ENCODE measurements at regions of chr20 and their contacts with region 1.

Region 1: DNA sequence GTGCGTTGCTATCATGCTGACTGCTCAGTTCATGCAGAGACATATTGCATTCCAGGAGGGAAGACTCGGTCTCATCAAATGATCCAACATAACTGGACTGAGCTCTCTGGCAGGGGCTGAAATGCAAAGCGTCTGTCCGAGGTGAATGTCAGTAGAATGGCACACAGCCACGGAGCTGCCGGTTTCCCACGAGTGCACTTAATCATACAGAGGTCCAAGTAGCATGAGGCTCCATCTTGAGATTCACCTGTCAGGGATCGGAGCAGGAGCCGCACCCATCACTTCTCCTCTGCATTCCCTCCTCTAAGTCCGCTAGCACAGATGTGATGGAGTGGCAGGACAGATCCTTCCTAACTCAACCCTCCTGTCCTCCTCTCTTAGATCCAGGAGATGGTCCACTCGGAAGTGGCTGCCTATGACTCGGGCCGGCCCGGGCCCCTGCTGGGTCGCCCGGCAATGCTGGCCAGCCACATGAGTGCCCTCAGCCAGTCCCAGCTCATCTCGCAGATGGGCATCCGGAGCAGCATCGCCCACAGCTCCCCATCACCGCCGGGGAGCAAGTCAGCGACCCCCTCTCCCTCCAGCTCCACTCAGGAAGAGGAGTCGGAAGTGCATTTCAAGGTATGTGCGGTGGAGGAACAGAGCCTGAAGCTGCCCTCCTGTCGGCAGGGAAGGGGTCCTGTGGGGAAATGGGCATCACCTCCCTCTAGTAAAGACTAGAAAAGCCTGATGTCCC is 135.9 kb downstream of the JPH2 start:
- DNase-seq: peak in 1 of 35 experiments; percentile 15
- ATAC-seq: no peak
- H3K4me3 ChIP-seq: no peak overlapping the region
- H3K4me3 Mint-ChIP-seq: no peak overlapping the region
- H3K27ac ChIP-seq: no peak overlapping the region
- H3K27ac Mint-ChIP-seq: peak overlapping the region in 1 of 2 donors; percentile 11
- H3K4me1 ChIP-seq: peaks cover 0 to 3% of the 10 kb centered on the region in 2 experiments
- H3K4me1 Mint-ChIP-seq: peaks cover 5 to 14% (median 7%) of the 10 kb centered on the region in 3 donors
- H3K27me3 ChIP-seq: peaks cover 0 to 7% of the 10 kb centered on the region in 2 experiments
- H3K27me3 Mint-ChIP-seq: no peaks in the 10 kb centered on the region

Region 2: GRCh38 chr20:44069203-44070011 is 18.3 kb after region 1 on chr20:
- CTCF ChIA-PET with region 1: interaction called in 1 of 2 experiments, 11 read pairs
- POLR2A ChIA-PET with region 1: no interaction called
- DNase-seq: peak; percentile 50 to 93 (median 81)
- ATAC-seq: peak; percentile 59 to 68 (median 67)
- H3K4me3 ChIP-seq: peak overlapping the region; percentile 51 to 52
- H3K4me3 Mint-ChIP-seq: peak overlapping the region; percentile 76 to 83 (median 81)
- H3K27ac ChIP-seq: peak overlapping the region; percentile 94
- H3K27ac Mint-ChIP-seq: peak overlapping the region; percentile 97 to 99
- H3K4me1 ChIP-seq: peaks cover 56 to 82% of the 10 kb centered on the region in 2 experiments
- H3K4me1 Mint-ChIP-seq: peaks cover 80 to 90% (median 81%) of the 10 kb centered on the region in 3 donors
- H3K27me3 ChIP-seq: peaks cover 0 to 28% of the 10 kb centered on the region in 2 experiments
- H3K27me3 Mint-ChIP-seq: peaks cover 0 to 8% of the 10 kb centered on the region in 2 donors